CD14-positive monocyte (primary cell): ENCODE measurements at regions of chr15 and their contacts with region 1.

Region 1: GRCh38 chr15:99213187-99213811 is 36.1 kb downstream of the TTC23 start:
- DNase-seq: peak; percentile 3 to 37 (median 27)
- H3K4me3 ChIP-seq: no peak overlapping the region
- H3K4me3 Mint-ChIP-seq: no peak overlapping the region
- H3K27ac ChIP-seq: no peak overlapping the region
- H3K27ac Mint-ChIP-seq: no peak overlapping the region
- H3K4me1 ChIP-seq: no peaks in the 10 kb centered on the region
- H3K4me1 Mint-ChIP-seq: no peaks in the 10 kb centered on the region
- H3K27me3 ChIP-seq: no peaks in the 10 kb centered on the region
- H3K27me3 Mint-ChIP-seq: peaks cover 0 to 2% (median 1%) of the 10 kb centered on the region in 3 donors
- CTCF ChIP-seq: peak; percentile 90

Region 2: DNA sequence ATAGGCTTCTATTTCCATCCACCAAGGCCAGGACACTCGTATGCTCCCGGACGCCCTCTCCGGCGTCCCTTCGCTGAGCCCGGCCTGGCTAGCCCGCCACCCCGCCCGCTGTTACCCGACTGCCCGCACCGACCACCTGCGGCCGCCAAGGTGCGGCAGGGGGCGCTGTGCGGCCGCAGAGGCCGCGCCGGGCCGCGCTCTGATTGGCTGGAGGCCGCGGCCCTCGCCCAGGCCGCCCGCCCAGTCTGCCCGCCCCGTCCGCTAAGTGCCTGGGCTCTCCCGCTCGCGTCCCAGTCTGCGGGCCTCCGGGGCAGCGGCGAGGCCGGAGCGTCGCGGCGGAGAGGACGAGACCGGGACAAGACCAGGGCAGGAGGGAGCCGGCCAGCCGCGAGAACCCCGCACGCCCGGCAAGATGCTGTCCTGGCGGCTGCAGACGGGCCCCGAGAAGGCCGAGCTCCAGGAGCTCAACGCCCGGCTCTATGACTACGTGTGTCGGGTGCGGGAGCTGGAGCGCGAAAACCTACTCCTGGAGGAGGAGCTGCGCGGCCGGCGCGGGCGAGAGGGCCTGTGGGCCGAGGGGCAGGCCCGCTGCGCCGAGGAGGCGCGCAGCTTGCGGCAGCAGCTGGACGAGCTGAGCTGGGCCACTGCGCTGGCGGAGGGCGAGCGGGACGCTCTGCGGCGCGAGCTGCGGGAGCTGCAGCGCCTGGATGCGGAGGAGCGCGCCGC is 108.3 kb before region 1 on chr15 and contains the start of gene SYNM:
- intact Hi-C with region 1: loop called (anchors 5 kb)
- DNase-seq: peak; percentile 19 to 53 (median 39)
- H3K4me3 ChIP-seq: peak within 1 kb of the TSS in 2 of 3 experiments; percentile 40 to 69
- H3K4me3 Mint-ChIP-seq: peak within 1 kb of the TSS; percentile 68 to 86
- H3K27ac ChIP-seq: no peak within 1 kb of the TSS
- H3K27ac Mint-ChIP-seq: no peak within 1 kb of the TSS
- H3K4me1 ChIP-seq: peaks cover 8 to 25% of the 10 kb centered on the region in 2 donors
- H3K4me1 Mint-ChIP-seq: peaks cover 31% of the 10 kb centered on the region
- H3K27me3 ChIP-seq: peaks cover 24 to 68% of the 10 kb centered on the region in 2 donors
- H3K27me3 Mint-ChIP-seq: peaks cover 54 to 71% (median 71%) of the 10 kb centered on the region in 3 donors
- CTCF ChIP-seq: peak; percentile 57
- polyA plus RNA-seq, gene SYNM: 0.04 to 0.05 TPM in 2 of 3 donors, not detected in the other